ENCODE measurements at regions of chr7 and their contacts with region 1.

Region 1: DNA sequence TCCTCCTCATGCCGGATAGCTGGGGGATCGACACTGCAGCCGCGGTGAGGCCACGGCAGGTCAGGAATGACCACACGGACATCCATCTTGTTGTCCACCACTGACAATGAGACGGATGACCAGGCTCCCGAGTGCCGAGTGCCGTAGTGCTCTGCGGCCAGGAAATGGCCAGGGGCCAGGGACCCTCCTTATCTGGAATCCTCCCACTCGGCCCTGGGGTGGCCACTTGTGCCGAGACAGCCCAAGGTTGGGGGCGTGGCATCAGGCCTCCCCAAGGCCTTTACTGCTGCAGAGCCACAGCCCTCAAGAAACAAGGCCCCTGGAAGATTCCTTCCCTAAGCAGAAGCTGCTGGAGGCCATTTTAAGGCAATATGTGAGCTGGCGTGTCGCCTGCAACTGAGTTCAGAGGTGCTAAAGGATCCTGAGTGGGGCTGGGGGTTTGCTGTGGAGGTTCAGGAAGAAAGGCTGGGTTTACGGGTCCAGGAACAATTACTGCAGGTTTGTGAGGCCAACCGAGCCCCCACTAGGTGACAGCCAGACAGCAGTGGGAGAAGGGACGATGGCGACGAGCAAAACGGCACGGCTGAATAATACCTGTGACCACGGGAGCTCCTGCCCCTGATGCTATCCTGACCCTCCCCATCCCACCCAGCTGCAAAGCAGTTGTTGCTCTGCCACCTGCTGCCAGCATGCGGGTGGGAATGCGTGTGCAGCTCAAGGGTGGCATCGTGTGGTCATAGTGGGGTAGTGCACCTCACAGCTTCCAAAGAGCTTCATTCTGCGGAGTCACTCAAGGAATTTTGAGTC is 31.6 kb upstream of the LEP start:
- DNase-seq: peak; percentile 47
- H3K4me3 ChIP-seq: no peak overlapping the region
- H3K27ac ChIP-seq: no peak overlapping the region
- H3K4me1 ChIP-seq: no peaks in the 10 kb centered on the region
- H3K27me3 ChIP-seq: no peaks in the 10 kb centered on the region
- CTCF ChIP-seq: peak; percentile 96 to 98 (median 97)
- POLR2A ChIP-seq: no peak

Region 2: GRCh38 chr7:127708788-127709187 is 500.6 kb before region 1 on chr7:
- intact Hi-C with region 1: loop called (anchors 2 kb)
- DNase-seq: peak; percentile 72
- H3K4me3 ChIP-seq: no peak overlapping the region
- H3K27ac ChIP-seq: no peak overlapping the region
- H3K4me1 ChIP-seq: no peaks in the 10 kb centered on the region
- H3K27me3 ChIP-seq: no peaks in the 10 kb centered on the region
- CTCF ChIP-seq: peak in 3 of 4 experiments; percentile 73 to 78 (median 74)
- POLR2A ChIP-seq: no peak

Region 3: GRCh38 chr7:128010394-128011127 is 198.9 kb before region 1 on chr7:
- intact Hi-C with region 1: no loop called
- DNase-seq: no peak
- H3K4me3 ChIP-seq: no peak overlapping the region
- H3K27ac ChIP-seq: no peak overlapping the region
- H3K4me1 ChIP-seq: no peaks in the 10 kb centered on the region
- H3K27me3 ChIP-seq: no peaks in the 10 kb centered on the region
- CTCF ChIP-seq: no peak
- POLR2A ChIP-seq: no peak

Region 4: GRCh38 chr7:128031901-128032604 is 177.4 kb before region 1 on chr7:
- intact Hi-C with region 1: loop called (anchors 10 kb)
- DNase-seq: peak; percentile 16
- H3K4me3 ChIP-seq: peak overlapping the region; percentile 35 to 38
- H3K27ac ChIP-seq: no peak overlapping the region
- H3K4me1 ChIP-seq: peaks cover 7% of the 10 kb centered on the region
- H3K27me3 ChIP-seq: no peaks in the 10 kb centered on the region
- CTCF ChIP-seq: no peak
- POLR2A ChIP-seq: no peak

Region 5: DNA sequence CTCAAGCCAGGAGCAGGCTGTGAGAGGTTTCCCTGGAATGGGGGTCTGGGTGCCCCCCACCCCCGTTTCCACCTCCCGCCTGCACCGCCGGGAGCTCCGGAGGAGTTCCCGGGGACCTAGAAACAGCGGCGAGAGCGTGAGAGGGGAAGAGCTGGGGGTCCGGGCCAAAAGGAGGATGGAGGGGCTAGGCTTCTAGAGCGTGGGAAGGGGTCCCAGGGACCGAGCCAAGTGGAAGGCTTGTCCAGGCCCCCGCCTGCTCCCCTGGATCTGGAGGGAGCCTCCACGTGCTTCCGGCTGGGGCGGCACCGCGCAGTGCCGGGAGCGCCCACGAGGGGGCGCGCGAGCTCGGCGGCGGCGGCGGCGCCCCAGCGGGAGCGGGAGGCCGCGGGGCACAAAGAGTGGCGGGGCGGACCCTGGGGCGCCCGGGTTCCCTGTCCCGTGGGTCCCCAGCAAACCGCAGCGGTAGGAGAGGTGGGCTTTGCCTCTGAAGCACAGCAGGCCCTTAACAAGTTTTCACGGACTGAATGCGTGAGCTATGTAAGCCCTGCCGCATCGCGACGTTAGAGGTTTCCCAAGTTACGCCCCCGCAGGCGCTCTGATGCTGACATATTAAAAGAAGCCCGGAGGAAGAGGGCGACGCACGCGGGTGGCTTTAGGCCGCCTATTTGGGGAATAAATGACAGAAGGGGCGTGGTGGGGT is 73.8 kb before region 1 on chr7:
- intact Hi-C with region 1: loop called (anchors 5 kb)
- DNase-seq: peak; percentile 13
- H3K4me3 ChIP-seq: peak overlapping the region; percentile 31 to 39
- H3K27ac ChIP-seq: no peak overlapping the region
- H3K4me1 ChIP-seq: peaks cover 3% of the 10 kb centered on the region
- H3K27me3 ChIP-seq: peaks cover 3% of the 10 kb centered on the region
- CTCF ChIP-seq: peak; percentile 80 to 94 (median 87)
- POLR2A ChIP-seq: no peak

Region 6: GRCh38 chr7:128311013-128311412 is 101.6 kb after region 1 on chr7:
- intact Hi-C with region 1: no loop called
- DNase-seq: no peak
- H3K4me3 ChIP-seq: no peak overlapping the region
- H3K27ac ChIP-seq: no peak overlapping the region
- H3K4me1 ChIP-seq: no peaks in the 10 kb centered on the region
- H3K27me3 ChIP-seq: no peaks in the 10 kb centered on the region
- CTCF ChIP-seq: no peak
- POLR2A ChIP-seq: no peak

Measured in prostate gland (tissue), 2 donors.